Activated CD4-positive, alpha-beta memory T cell treated with anti-CD3 and anti-CD28 coated beads for 36 hours (primary cell): ENCODE measurements at regions of chr6 and their contacts with region 1.

Region 1: DNA sequence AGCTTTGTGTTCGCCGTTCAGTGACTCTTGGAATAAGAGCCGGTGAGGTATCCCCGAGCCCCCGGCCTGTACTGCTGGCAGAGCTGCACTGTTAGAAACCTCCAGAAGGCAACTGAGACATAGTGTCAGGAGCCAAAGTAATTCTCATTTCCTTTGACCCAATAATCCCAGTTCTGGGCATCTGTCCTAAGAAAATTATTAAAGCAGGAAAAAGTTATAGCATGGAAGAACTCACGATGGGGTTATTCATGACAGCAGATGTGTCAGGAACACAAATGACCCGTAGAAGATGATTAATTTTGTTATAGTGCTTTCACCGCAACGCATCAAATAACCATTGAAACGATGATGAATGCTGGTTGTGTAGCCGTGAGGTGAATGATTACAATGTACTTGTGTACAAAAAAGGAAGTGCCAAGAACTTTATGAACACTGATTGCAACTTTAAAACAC is 20.3 kb downstream of the CYP21A2 start:
- DNase-seq: no peak
- H3K4me3 Mint-ChIP-seq: no peak overlapping the region
- H3K27ac Mint-ChIP-seq: no peak overlapping the region
- H3K4me1 Mint-ChIP-seq: no peaks in the 10 kb centered on the region
- H3K27me3 Mint-ChIP-seq: peaks cover 3% of the 10 kb centered on the region

Region 2: GRCh38 chr6:32047850-32048766 is 10.4 kb before region 1 on chr6:
- CTCF ChIA-PET with region 1: interaction called, 11 read pairs
- POLR2A ChIA-PET with region 1: no interaction called
- intact Hi-C with region 1: no loop called
- DNase-seq: peak; percentile 73
- H3K4me3 Mint-ChIP-seq: no peak overlapping the region
- H3K27ac Mint-ChIP-seq: no peak overlapping the region
- H3K4me1 Mint-ChIP-seq: peaks cover 5% of the 10 kb centered on the region
- H3K27me3 Mint-ChIP-seq: no peaks in the 10 kb centered on the region

Region 3: DNA sequence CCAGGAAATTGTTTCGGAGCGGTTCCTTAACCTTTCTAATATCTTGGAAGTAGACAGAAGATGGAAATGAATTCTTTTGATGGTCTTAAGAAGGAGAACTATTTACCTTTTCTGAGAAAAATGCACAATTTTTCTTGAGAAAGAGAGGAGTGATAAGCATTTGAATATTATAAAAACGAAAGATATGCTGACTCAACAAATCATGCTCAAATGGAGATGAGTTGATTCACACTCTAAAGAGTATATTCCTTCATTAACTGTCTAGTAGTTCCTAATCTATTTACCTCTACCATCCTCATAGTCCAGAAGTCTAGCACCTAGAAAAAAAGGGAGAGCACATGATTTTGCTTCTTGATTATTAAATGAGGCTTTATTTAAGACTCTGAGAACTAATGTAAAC is 309.1 kb after region 1 on chr6:
- CTCF ChIA-PET with region 1: no interaction called
- POLR2A ChIA-PET with region 1: no interaction called
- intact Hi-C with region 1: no loop called
- DNase-seq: no peak
- H3K4me3 Mint-ChIP-seq: no peak overlapping the region
- H3K27ac Mint-ChIP-seq: no peak overlapping the region
- H3K4me1 Mint-ChIP-seq: peaks cover 8% of the 10 kb centered on the region
- H3K27me3 Mint-ChIP-seq: peaks cover 36% of the 10 kb centered on the region